ENCODE measurements at regions of chr13 and their contacts with region 1.

Region 1: DNA sequence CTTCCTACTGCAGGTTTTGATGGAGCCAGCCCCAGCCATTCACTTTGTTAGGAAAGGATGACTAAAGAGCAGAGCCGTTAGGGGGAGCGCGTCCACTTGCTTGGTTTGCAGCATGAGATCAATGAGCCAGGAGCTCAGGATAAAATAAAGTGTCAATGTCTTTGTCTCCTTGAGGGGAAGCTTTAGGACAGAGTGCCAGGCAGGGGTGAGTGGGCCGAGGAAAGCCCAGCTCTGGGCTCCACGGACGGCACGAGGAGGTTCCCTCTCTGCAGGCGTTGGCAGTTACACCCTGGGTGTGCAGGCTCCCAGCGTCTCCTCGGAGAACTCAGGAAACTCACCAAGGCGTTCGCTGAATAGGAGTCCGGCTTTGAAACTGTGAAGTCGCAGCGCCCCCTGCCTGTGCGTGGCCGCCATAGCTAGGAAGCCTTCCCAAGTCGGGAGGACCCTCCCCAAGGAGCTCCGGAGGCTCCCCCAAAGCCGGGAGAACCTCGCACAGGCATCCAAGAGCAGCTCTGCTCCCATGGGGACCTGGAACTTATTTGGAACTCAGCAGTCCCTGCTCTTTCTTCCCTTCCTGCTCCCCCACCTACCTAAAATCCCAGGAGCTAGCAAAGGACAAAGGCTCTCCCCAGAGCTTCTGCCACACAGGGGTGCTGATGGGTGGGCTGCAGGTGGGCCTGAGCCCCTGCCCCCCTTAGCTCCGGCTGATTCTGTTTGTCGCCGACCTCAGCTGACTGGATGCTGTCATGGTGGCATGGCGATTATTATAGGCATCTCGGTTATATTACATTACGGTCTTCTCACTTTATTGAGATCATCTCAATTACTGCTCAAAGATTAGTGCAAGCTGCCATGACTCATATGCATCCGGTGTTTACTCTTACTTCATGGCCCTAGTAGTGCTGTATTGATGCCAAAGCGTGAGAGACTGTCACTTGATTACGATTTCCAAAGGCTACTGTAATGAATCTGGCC is 34.4 kb downstream of the GSX1 start:
- DNase-seq: peak; percentile 81
- ATAC-seq: peak; percentile 98
- H3K4me3 ChIP-seq: peak overlapping the region; percentile 23
- H3K27ac ChIP-seq: no peak overlapping the region
- H3K4me1 ChIP-seq: no peaks in the 10 kb centered on the region
- H3K27me3 ChIP-seq: peaks cover 29% of the 10 kb centered on the region
- CTCF ChIP-seq: peak; percentile 92
- POLR2A ChIP-seq: no peak
- RAD21 ChIP-seq: peak; percentile 95

Region 2: DNA sequence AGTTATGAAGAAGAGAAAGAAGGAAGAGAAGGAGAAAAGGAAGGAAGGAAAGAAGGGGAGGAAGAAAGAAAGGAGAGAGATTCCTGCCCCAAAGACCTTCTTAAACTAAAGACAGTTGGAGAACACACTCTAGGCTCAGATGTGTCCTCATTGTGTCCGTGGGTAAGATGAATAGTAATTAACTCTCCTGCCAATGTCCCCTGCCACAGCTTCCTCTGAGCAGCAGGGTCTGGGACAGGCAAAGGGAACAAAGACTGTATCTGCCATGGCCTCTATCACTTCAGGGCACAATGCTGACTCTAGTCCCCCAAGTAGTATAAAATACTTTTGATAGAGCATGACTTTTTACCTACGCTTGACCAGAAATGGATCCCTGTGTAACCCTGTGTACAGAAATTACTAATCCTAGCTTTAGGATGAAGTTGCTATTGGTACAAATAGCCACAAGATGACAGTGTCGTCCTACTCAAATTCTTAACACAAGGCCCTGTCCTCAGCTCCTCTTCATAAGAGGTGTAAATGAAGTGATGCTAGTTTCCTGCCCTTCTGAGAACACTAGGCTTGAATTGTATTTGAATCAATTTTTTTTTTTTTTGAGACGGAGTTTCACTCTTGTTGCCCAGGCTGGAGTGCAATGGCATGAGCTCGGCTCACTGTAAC is 879.9 kb before region 1 on chr13:
- CTCF ChIA-PET with region 1: interaction called, 7 read pairs
- POLR2A ChIA-PET with region 1: no interaction called
- dilution Hi-C with region 1: no loop called
- in situ Hi-C with region 1: loop called (anchors 25 kb)
- intact Hi-C with region 1: loop called (anchors 5 kb)
- DNase-seq: peak; percentile 73
- ATAC-seq: peak; percentile 97
- H3K4me3 ChIP-seq: no peak overlapping the region
- H3K27ac ChIP-seq: no peak overlapping the region
- H3K4me1 ChIP-seq: peaks cover 3% of the 10 kb centered on the region; the same call in 1 of the 2 replicates
- H3K27me3 ChIP-seq: peaks cover 13% of the 10 kb centered on the region
- CTCF ChIP-seq: peak; percentile 93
- POLR2A ChIP-seq: 0 out of 2 replicates have a peak, but pooled peaks have one; percentile 31
- RAD21 ChIP-seq: peak; percentile 95

Region 3: GRCh38 chr13:27374650-27375049 is 452.0 kb before region 1 on chr13:
- CTCF ChIA-PET with region 1: interaction called, 14 read pairs
- POLR2A ChIA-PET with region 1: no interaction called
- dilution Hi-C with region 1: no loop called
- in situ Hi-C with region 1: loop called (anchors 5 kb)
- intact Hi-C with region 1: loop called (anchors 1 kb)
- DNase-seq: peak; percentile 88
- ATAC-seq: peak; percentile 98
- H3K4me3 ChIP-seq: no peak overlapping the region
- H3K27ac ChIP-seq: no peak overlapping the region
- H3K4me1 ChIP-seq: no peaks in the 10 kb centered on the region
- H3K27me3 ChIP-seq: peaks cover 22% of the 10 kb centered on the region
- CTCF ChIP-seq: peak; percentile 89
- POLR2A ChIP-seq: no peak
- RAD21 ChIP-seq: peak; percentile 82

Region 4: GRCh38 chr13:27449936-27450828 is 376.5 kb before region 1 on chr13 and contains the start of gene MTIF3:
- CTCF ChIA-PET with region 1: interaction called, 5 read pairs
- POLR2A ChIA-PET with region 1: no interaction called
- dilution Hi-C with region 1: no loop called
- in situ Hi-C with region 1: no loop called
- intact Hi-C with region 1: loop called (anchors 1 kb)
- DNase-seq: peak; percentile 90
- ATAC-seq: peak; percentile 96
- H3K4me3 ChIP-seq: peak within 1 kb of the TSS; percentile 74
- H3K27ac ChIP-seq: peak within 1 kb of the TSS; percentile 89
- H3K4me1 ChIP-seq: peaks cover 4% of the 10 kb centered on the region
- H3K27me3 ChIP-seq: no peaks in the 10 kb centered on the region
- CTCF ChIP-seq: no peak
- POLR2A ChIP-seq: peak; percentile 56
- RAD21 ChIP-seq: no peak
- total RNA-seq, gene MTIF3: 31.7 and 60.8 TPM in 2 replicates

Region 5: DNA sequence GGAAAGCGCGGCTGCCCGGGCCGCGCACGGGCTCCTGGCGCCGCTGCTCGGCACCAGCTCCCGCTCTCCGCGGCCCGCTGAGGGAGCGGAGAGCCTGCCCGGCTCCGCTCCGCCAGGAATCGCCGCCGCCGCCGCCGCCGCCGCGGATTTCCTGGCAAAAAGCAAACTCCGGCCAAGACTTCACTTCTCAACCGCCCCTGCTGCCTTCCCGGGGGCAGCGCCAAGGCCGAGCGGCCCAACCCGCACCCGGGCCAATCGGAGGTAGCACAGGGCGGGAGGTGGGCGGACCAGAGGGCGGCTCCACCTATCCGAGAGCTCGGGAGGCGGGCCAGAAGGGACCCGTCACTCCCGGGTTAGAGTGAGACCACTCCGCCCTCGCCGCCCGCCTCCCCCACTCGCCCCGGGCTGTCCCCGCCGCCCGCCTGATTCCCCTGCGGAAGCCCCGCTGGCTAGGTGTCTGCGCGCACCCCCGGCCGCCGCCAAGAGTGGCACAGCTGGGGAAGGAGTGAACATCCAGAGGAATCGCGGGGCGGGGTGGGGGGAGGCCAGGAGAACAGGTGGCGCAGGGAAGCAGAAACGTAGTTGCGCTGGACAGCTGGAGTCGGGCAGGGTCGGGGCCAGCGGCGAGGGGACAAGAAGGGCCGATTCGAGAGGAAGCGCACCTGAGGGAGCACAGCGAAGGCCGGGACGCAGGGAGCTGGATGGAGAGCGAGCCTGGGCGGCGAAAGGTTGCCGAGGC is 206.1 kb before region 1 on chr13 and contains the start of gene LNX2:
- CTCF ChIA-PET with region 1: no interaction called
- POLR2A ChIA-PET with region 1: no interaction called
- dilution Hi-C with region 1: no loop called
- in situ Hi-C with region 1: no loop called
- intact Hi-C with region 1: loop called (anchors 2 kb)
- DNase-seq: peak; percentile 95
- ATAC-seq: peak; percentile 96
- H3K4me3 ChIP-seq: peak within 1 kb of the TSS; percentile 99
- H3K27ac ChIP-seq: peak within 1 kb of the TSS; percentile 61
- H3K4me1 ChIP-seq: no peaks in the 10 kb centered on the region
- H3K27me3 ChIP-seq: no peaks in the 10 kb centered on the region
- CTCF ChIP-seq: no peak
- POLR2A ChIP-seq: no peak
- RAD21 ChIP-seq: no peak
- total RNA-seq, gene LNX2: 7.2 and 7.8 TPM in 2 replicates

Region 6: DNA sequence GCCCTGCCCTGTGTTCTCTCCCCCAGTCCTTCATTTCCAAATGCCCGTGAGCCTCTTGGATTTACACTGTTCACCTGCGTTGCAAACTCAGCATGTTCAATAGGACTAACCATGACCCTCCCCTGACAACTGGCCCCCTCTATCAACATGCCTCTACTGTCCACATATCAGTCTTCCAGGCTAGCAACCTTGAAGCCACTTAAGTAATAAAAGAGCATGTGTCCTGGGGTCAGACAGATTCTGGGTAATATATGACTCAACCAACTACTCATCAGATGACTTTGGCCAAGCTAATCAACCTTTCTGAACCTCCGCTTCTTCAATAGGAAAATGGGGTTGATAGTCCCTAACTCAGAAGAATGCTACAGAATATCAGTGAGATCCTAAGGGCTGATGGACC is 78.1 kb after region 1 on chr13:
- CTCF ChIA-PET with region 1: no interaction called
- POLR2A ChIA-PET with region 1: no interaction called
- dilution Hi-C with region 1: no loop called
- in situ Hi-C with region 1: no loop called
- intact Hi-C with region 1: no loop called
- DNase-seq: no peak
- ATAC-seq: no peak
- H3K4me3 ChIP-seq: no peak overlapping the region
- H3K27ac ChIP-seq: no peak overlapping the region
- H3K4me1 ChIP-seq: no peaks in the 10 kb centered on the region
- H3K27me3 ChIP-seq: peaks cover 20% of the 10 kb centered on the region
- CTCF ChIP-seq: no peak
- POLR2A ChIP-seq: no peak
- RAD21 ChIP-seq: no peak

Region 7: DNA sequence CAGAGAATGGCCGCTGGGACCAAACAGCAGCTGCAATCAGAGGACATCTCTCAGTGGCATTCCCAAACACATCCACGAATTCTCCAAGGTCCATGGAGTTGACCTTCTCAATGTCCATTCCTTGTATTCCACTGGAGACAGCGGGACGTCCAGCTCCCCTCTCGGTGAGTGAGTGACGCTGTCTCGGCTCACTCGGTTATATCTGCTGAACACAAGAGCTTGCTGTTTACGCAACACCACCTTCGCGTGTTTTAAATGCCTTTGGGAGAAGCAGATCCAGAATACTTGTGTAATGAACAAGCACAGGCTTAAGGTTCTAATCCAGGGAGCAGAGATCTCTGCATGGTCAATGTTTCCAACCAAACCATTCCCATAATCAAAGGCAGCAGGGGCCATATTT is 161.9 kb after region 1 on chr13 and contains the start of gene URAD:
- CTCF ChIA-PET with region 1: interaction called, 14 read pairs
- POLR2A ChIA-PET with region 1: no interaction called
- dilution Hi-C with region 1: no loop called
- in situ Hi-C with region 1: loop called (anchors 5 kb)
- intact Hi-C with region 1: loop called (anchors 1 kb)
- DNase-seq: no peak
- ATAC-seq: no peak
- H3K4me3 ChIP-seq: no peak within 1 kb of the TSS
- H3K27ac ChIP-seq: no peak within 1 kb of the TSS
- H3K4me1 ChIP-seq: no peaks in the 10 kb centered on the region
- H3K27me3 ChIP-seq: peaks cover 44% of the 10 kb centered on the region
- CTCF ChIP-seq: no peak
- POLR2A ChIP-seq: no peak
- RAD21 ChIP-seq: no peak
- total RNA-seq, gene URAD: not detected in 2 replicates

Region 8: GRCh38 chr13:28110414-28110813 is 283.7 kb after region 1 on chr13:
- CTCF ChIA-PET with region 1: no interaction called
- POLR2A ChIA-PET with region 1: no interaction called
- dilution Hi-C with region 1: no loop called
- in situ Hi-C with region 1: no loop called
- intact Hi-C with region 1: no loop called
- DNase-seq: no peak
- ATAC-seq: no peak
- H3K4me3 ChIP-seq: no peak overlapping the region
- H3K27ac ChIP-seq: no peak overlapping the region
- H3K4me1 ChIP-seq: no peaks in the 10 kb centered on the region
- H3K27me3 ChIP-seq: peaks cover 4% of the 10 kb centered on the region
- CTCF ChIP-seq: no peak
- POLR2A ChIP-seq: no peak
- RAD21 ChIP-seq: no peak

Measured in IMR-90 (cell line).